HepG2 (cell line): ENCODE measurements at regions of chr14 and their contacts with region 1.

Region 1: DNA sequence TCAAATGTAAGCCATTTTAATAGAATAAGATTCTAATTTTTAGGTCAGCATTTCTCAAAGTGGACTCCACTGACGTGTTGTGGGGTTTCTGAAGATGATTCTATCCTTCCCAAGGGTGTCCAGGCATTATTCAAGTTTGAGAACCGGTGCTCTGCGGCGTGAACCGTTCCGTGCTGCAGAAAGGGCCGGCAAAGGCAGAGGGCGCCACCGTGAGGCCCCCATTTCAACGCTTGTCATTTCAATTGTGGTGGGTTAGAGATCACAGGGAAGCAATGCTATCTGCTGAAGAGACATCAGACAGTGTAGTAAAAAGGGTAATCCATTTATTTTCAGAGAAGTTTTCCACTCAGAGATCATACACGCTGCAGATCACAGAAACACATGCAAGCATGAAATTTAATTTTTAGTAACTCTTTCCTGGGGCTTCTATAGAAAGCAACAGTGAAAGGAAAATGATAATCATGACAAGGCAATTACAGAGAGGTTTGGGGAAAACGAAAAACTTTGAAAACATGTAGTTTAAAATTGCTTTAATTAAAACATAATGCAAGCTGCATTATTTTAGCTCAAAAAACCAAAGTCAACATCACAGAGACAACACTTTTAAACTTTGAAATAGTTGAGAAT is 201.7 kb downstream of the EXOC5 start:
- DNase-seq: peak; percentile 16
- ATAC-seq: peak; percentile 95
- H3K4me3 ChIP-seq: no peak overlapping the region
- H3K27ac ChIP-seq: no peak overlapping the region
- H3K4me1 ChIP-seq: no peaks in the 10 kb centered on the region
- H3K27me3 ChIP-seq: peaks cover 0 to 5% of the 10 kb centered on the region in 2 experiments; a peak in 2 of 5 replicates
- CTCF ChIP-seq: peak; percentile 85
- EP300 ChIP-seq: no peak
- POLR2A ChIP-seq: no peak
- RAD21 ChIP-seq: peak; percentile 47

Region 2: GRCh38 chr14:56491299-56492285 is 575.4 kb before region 1 on chr14:
- CTCF ChIA-PET with region 1: interaction called, 8 read pairs
- POLR2A ChIA-PET with region 1: no interaction called
- in situ Hi-C with region 1: no loop called
- intact Hi-C with region 1: loop called (anchors 1 kb)
- DNase-seq: peak; percentile 49
- ATAC-seq: peak; percentile 83
- H3K4me3 ChIP-seq: no peak overlapping the region
- H3K27ac ChIP-seq: no peak overlapping the region
- H3K4me1 ChIP-seq: no peaks in the 10 kb centered on the region
- H3K27me3 ChIP-seq: no peaks in the 10 kb centered on the region; a peak in 1 of 5 replicates
- CTCF ChIP-seq: peak; percentile 80
- EP300 ChIP-seq: no peak
- POLR2A ChIP-seq: no peak
- RAD21 ChIP-seq: no peak

Region 3: GRCh38 chr14:56659964-56660551 is 406.9 kb before region 1 on chr14:
- CTCF ChIA-PET with region 1: no interaction called
- POLR2A ChIA-PET with region 1: no interaction called
- in situ Hi-C with region 1: no loop called
- intact Hi-C with region 1: loop called (anchors 5 kb)
- DNase-seq: peak; percentile 50
- ATAC-seq: peak; percentile 88
- H3K4me3 ChIP-seq: no peak overlapping the region
- H3K27ac ChIP-seq: no peak overlapping the region
- H3K4me1 ChIP-seq: peaks cover 20% of the 10 kb centered on the region
- H3K27me3 ChIP-seq: no peaks in the 10 kb centered on the region; a peak in 1 of 5 replicates
- CTCF ChIP-seq: peak; percentile 76
- EP300 ChIP-seq: no peak
- POLR2A ChIP-seq: no peak
- RAD21 ChIP-seq: peak; percentile 61

Region 4: GRCh38 chr14:57182760-57183503 is 115.9 kb after region 1 on chr14:
- CTCF ChIA-PET with region 1: no interaction called
- POLR2A ChIA-PET with region 1: no interaction called
- in situ Hi-C with region 1: no loop called
- intact Hi-C with region 1: loop called (anchors 2 kb)
- DNase-seq: peak; percentile 15
- ATAC-seq: peak; percentile 68
- H3K4me3 ChIP-seq: no peak overlapping the region
- H3K27ac ChIP-seq: no peak overlapping the region
- H3K4me1 ChIP-seq: no peaks in the 10 kb centered on the region
- H3K27me3 ChIP-seq: peaks cover 0 to 5% of the 10 kb centered on the region in 2 experiments; a peak in 2 of 5 replicates
- CTCF ChIP-seq: peak; percentile 66
- EP300 ChIP-seq: no peak
- POLR2A ChIP-seq: no peak
- RAD21 ChIP-seq: 0 out of 2 replicates have a peak, but pooled peaks have one; percentile 38

Region 5: GRCh38 chr14:57317316-57317715 is 250.3 kb after region 1 on chr14:
- CTCF ChIA-PET with region 1: interaction called, 4 read pairs
- POLR2A ChIA-PET with region 1: no interaction called
- in situ Hi-C with region 1: no loop called
- intact Hi-C with region 1: loop called (anchors 5 kb)
- DNase-seq: peak; percentile 76
- ATAC-seq: peak; percentile 74; the same call in 2 of the 3 replicates
- H3K4me3 ChIP-seq: no peak overlapping the region
- H3K27ac ChIP-seq: no peak overlapping the region
- H3K4me1 ChIP-seq: no peaks in the 10 kb centered on the region
- H3K27me3 ChIP-seq: peaks cover 3 to 13% of the 10 kb centered on the region in 2 experiments; a peak in 2 of 5 replicates
- CTCF ChIP-seq: peak; percentile 80
- EP300 ChIP-seq: no peak
- POLR2A ChIP-seq: no peak
- RAD21 ChIP-seq: 0 out of 2 replicates have a peak, but pooled peaks have one; percentile 54